ENCODE measurements at regions of chr6 and their contacts with region 1.

Region 1: GRCh38 chr6:32195652-32195901 is 3.1 kb upstream of the GPSM3 start:
- DNase-seq: peak; percentile 100
- ATAC-seq: peak in 6 of 8 donors; percentile 85 to 95 (median 86)
- H3K4me3 ChIP-seq: peak overlapping the region in 7 of 10 donors; percentile 65 to 79 (median 75)
- H3K27ac ChIP-seq: peak overlapping the region; percentile 98 to 100 (median 99)
- H3K4me1 ChIP-seq: peaks cover 11 to 68% (median 52%) of the 10 kb centered on the region in 9 donors
- H3K27me3 ChIP-seq: no peaks in the 10 kb centered on the region
- CTCF ChIP-seq: peak; percentile 45 to 82 (median 64)

Region 2: GRCh38 chr6:31971993-31972708 is 223.4 kb before region 1 on chr6 and contains the start of gene DXO:
- intact Hi-C with region 1: no loop called
- DNase-seq: peak; percentile 92 to 97
- ATAC-seq: peak; percentile 95 to 97 (median 96)
- H3K4me3 ChIP-seq: peak within 1 kb of the TSS; percentile 59 to 96 (median 74)
- H3K27ac ChIP-seq: peak within 1 kb of the TSS; percentile 87 to 96 (median 94)
- H3K4me1 ChIP-seq: peaks cover 6 to 31% (median 24%) of the 10 kb centered on the region in 9 donors
- H3K27me3 ChIP-seq: no peaks in the 10 kb centered on the region
- CTCF ChIP-seq: no peak
- total RNA-seq, gene DXO: 8.4 to 15.7 (median 13.2) TPM

Region 3: GRCh38 chr6:32177788-32178546 is 17.6 kb before region 1 on chr6 and contains the start of gene RNF5:
- intact Hi-C with region 1: loop called in 1 of 10 experiments (anchors 2 kb)
- DNase-seq: peak; percentile 87 to 99
- ATAC-seq: peak; percentile 82 to 89 (median 86)
- H3K4me3 ChIP-seq: peak within 1 kb of the TSS; percentile 56 to 93 (median 86)
- H3K27ac ChIP-seq: peak within 1 kb of the TSS; percentile 93 to 98 (median 94)
- H3K4me1 ChIP-seq: peaks cover 8 to 84% (median 55%) of the 10 kb centered on the region in 9 donors
- H3K27me3 ChIP-seq: no peaks in the 10 kb centered on the region
- CTCF ChIP-seq: no peak
- total RNA-seq, gene RNF5: 75.5 to 122 (median 82.7) TPM